ENCODE measurements at regions of chr1 and their contacts with region 1.

Region 1: GRCh38 chr1:154607609-154608396 is at the start of gene ADAR:
- DNase-seq: peak; percentile 99
- ATAC-seq: peak; percentile 85
- H3K4me3 ChIP-seq: peak within 1 kb of the TSS; percentile 78
- H3K27ac ChIP-seq: peak within 1 kb of the TSS; percentile 97
- H3K4me1 ChIP-seq: peaks cover 4% of the 10 kb centered on the region
- H3K27me3 ChIP-seq: no peaks in the 10 kb centered on the region
- CTCF ChIP-seq: no peak
- POLR2A ChIP-seq: no peak; the same call in 1 of the 2 replicates
- RAD21 ChIP-seq: 0 out of 2 replicates have a peak, but pooled peaks have one; percentile 6
- total RNA-seq, gene ADAR: 101 and 131 TPM in 2 replicates

Region 2: GRCh38 chr1:154220071-154220969 is 387.5 kb before region 1 on chr1 and contains the start of gene UBAP2L:
- CTCF ChIA-PET with region 1: no interaction called
- POLR2A ChIA-PET with region 1: interaction called, 10 read pairs
- dilution Hi-C with region 1: no loop called
- in situ Hi-C with region 1: no loop called
- intact Hi-C with region 1: no loop called
- DNase-seq: peak; percentile 99
- ATAC-seq: peak; percentile 91
- H3K4me3 ChIP-seq: peak within 1 kb of the TSS; percentile 94
- H3K27ac ChIP-seq: peak within 1 kb of the TSS; percentile 98
- H3K4me1 ChIP-seq: no peaks in the 10 kb centered on the region; the same call in 1 of the 2 replicates
- H3K27me3 ChIP-seq: no peaks in the 10 kb centered on the region
- CTCF ChIP-seq: no peak
- POLR2A ChIP-seq: peak; percentile 91
- RAD21 ChIP-seq: no peak
- total RNA-seq, gene UBAP2L: 57.5 and 77.2 TPM in 2 replicates

Region 3: DNA sequence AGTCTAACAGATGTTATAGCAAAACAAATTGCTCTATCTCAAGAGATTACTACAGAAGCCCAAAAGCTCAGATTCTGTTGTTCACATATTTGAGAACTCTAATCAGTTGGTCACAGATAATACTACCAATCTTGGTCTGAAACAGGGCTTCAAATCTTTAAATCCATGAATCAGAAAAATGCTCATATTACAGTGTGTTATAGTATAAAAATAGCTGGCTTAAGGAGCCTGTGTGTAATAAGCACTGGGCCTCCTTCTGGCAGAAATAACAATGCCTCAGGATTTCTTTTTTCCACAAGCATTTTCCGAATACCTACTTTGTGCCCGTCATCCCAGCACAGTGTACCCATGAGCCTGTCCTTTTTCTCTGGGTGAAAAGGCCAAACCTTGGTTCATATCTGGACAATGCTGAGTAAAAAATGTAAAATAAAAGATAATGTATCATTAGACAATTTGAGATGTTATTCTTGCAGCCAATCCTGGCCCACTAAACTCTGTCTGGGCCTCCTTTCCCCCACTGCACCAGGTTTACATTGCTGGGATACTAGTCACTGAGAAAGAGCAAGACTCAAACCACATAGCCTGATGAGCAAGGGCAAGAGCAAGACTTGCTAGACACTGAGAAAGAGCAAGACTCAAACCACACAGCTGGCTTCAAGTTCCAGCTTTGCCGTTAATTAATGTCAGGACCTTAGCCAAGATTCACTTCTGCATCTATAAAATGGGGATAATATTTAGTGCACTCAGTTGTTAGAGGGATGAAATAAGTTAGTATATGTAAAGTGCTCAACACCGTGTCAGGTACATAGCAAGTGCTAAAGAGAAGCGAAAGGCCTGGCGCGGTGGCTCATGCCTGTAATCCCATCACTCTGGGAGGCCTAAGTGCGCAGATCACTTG is 17.2 kb after region 1 on chr1:
- CTCF ChIA-PET with region 1: interaction called, 3 read pairs
- POLR2A ChIA-PET with region 1: no interaction called
- dilution Hi-C with region 1: no loop called
- in situ Hi-C with region 1: no loop called
- intact Hi-C with region 1: loop called (anchors 1 kb)
- DNase-seq: peak; percentile 97
- ATAC-seq: peak; percentile 82
- H3K4me3 ChIP-seq: no peak overlapping the region
- H3K27ac ChIP-seq: peak overlapping the region; percentile 56; the same call in 1 of the 2 replicates
- H3K4me1 ChIP-seq: peaks cover 9% of the 10 kb centered on the region
- H3K27me3 ChIP-seq: no peaks in the 10 kb centered on the region
- CTCF ChIP-seq: peak; percentile 22; the same call in 1 of the 2 replicates
- POLR2A ChIP-seq: peak; percentile 36; the same call in 1 of the 2 replicates
- RAD21 ChIP-seq: no peak; the same call in 1 of the 2 replicates

Region 4: DNA sequence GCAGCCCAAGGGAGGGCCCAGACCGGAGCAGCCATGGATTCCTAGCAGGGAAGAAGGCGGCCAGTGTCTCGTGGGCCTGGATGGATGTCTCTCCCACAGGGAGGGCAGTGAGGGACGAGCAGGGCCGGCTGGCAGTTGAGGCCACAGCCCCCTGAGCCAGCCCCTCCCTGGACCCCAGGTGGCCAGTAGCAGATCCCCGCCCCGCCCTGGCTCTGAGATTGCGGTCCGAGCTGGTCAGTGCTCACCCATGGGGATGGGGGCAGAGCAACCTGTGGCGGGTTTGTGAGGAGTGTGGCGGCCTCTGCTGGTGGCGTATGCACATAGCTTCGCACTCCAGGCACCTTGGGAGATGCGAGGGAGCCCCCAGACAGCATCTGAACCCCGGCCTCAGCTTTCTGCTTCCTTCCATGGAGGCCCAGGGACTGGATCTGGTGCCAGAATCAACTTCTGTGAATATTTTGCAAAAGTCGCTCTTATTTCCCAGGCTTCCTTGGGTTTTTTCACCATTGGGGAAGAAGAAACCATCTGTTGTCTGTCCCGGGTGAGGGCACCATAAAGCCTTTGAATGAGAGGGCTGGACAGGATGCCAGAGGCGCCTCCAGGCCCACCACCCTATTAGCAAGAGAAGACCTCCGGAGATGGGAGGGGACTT is 270.7 kb after region 1 on chr1:
- CTCF ChIA-PET with region 1: no interaction called
- POLR2A ChIA-PET with region 1: no interaction called
- dilution Hi-C with region 1: no loop called
- in situ Hi-C with region 1: no loop called
- intact Hi-C with region 1: loop called (anchors 5 kb)
- DNase-seq: peak; percentile 62
- ATAC-seq: peak; percentile 99
- H3K4me3 ChIP-seq: no peak overlapping the region
- H3K27ac ChIP-seq: no peak overlapping the region
- H3K4me1 ChIP-seq: peaks cover 1% of the 10 kb centered on the region; the same call in 1 of the 2 replicates
- H3K27me3 ChIP-seq: peaks cover 64% of the 10 kb centered on the region
- CTCF ChIP-seq: peak; percentile 84
- POLR2A ChIP-seq: no peak
- RAD21 ChIP-seq: peak; percentile 94

Region 5: GRCh38 chr1:155069551-155070157 is 461.9 kb after region 1 on chr1:
- CTCF ChIA-PET with region 1: no interaction called
- POLR2A ChIA-PET with region 1: no interaction called
- dilution Hi-C with region 1: no loop called
- in situ Hi-C with region 1: no loop called
- intact Hi-C with region 1: no loop called
- DNase-seq: no peak
- ATAC-seq: no peak
- H3K4me3 ChIP-seq: no peak overlapping the region
- H3K27ac ChIP-seq: no peak overlapping the region
- H3K4me1 ChIP-seq: peaks cover 5% of the 10 kb centered on the region; the same call in 1 of the 2 replicates
- H3K27me3 ChIP-seq: peaks cover 11% of the 10 kb centered on the region
- CTCF ChIP-seq: no peak
- POLR2A ChIP-seq: no peak
- RAD21 ChIP-seq: no peak

Measured in IMR-90 (cell line).